ENCODE measurements at regions of chr1 and their contacts with region 1.

Region 1: GRCh38 chr1:150473659-150474058 is 13.6 kb upstream of the TARS2 start:
- DNase-seq: no peak
- ATAC-seq: peak; percentile 34
- H3K4me3 ChIP-seq: no peak overlapping the region
- H3K27ac ChIP-seq: no peak overlapping the region
- H3K4me1 ChIP-seq: no peaks in the 10 kb centered on the region
- H3K27me3 ChIP-seq: no peaks in the 10 kb centered on the region

Region 2: DNA sequence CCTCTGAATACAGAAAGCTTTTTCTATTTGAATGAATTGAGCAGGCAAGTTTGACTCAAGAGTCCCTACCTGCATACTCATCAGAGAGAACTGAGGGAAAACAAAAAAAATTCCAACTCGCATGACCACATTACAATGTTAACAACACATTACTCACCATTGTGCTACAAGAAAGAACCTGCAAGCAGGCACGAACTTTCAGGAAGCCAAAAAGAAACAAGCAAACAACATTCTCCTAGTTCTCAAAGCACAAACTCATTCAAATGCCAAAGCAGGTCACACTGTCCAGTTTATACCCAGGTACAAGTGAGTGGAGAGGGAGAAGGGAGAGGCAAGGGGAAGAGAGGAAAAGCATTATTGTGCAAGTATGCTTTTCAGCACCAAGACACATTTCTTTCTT is 477.7 kb before region 1 on chr1:
- intact Hi-C with region 1: no loop called
- DNase-seq: no peak
- ATAC-seq: no peak
- H3K4me3 ChIP-seq: no peak overlapping the region
- H3K27ac ChIP-seq: no peak overlapping the region
- H3K4me1 ChIP-seq: no peaks in the 10 kb centered on the region
- H3K27me3 ChIP-seq: no peaks in the 10 kb centered on the region

Region 3: GRCh38 chr1:150507905-150508854 is 34.5 kb after region 1 on chr1 and contains the start of gene ECM1:
- intact Hi-C with region 1: loop called in 1 of 2 experiments (anchors 5 kb)
- DNase-seq: peak; percentile 70 to 80
- ATAC-seq: peak; percentile 70
- H3K4me3 ChIP-seq: no peak within 1 kb of the TSS
- H3K27ac ChIP-seq: no peak within 1 kb of the TSS
- H3K4me1 ChIP-seq: no peaks in the 10 kb centered on the region
- H3K27me3 ChIP-seq: no peaks in the 10 kb centered on the region
- total RNA-seq, gene ECM1: 26.3 to 57.6 TPM

Region 4: DNA sequence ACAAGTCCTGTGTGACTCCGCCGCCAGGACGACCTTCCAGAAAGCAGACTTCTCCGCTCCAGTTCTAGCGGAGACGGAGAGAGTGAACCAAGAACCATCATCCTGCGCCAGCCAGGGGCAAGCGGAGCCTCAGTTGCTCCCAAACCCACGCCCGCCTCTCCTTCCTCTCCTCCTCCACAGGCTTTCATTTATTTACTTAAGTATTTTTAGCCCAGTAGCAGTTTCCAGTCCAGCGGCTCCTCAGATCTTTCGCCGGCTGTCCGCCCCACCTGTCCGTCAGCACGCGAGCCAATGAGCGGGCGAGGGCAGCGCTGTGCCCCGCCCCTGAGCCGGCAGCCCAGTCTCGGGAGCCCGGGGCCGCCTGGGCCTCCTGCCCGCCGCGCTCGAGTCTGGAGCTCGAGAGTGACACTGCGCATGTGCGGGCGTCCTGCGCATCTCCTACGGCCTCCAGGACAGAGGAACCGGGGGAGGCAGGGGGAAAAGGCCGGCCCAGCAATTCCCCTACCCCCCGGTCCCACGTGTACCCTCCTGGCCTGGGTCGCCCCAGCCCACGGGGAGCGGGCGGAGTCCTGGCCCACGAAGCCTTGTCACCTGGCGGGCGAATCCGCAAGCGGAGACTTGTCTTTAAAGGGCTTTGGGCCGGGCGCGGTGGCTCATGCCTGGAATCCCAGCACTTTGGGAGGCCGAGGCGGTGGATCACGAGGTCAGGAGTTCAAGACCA is 41.8 kb after region 1 on chr1 and contains the start of gene FALEC:
- intact Hi-C with region 1: loop called in 1 of 2 experiments (anchors 5 kb)
- DNase-seq: peak; percentile 98 to 99
- ATAC-seq: peak; percentile 99
- H3K4me3 ChIP-seq: peak within 1 kb of the TSS; percentile 31 to 40
- H3K27ac ChIP-seq: peak within 1 kb of the TSS; percentile 44 to 61
- H3K4me1 ChIP-seq: no peaks in the 10 kb centered on the region
- H3K27me3 ChIP-seq: no peaks in the 10 kb centered on the region
- total RNA-seq, gene FALEC: 0.99 TPM in 1 of 2 donors, not detected in the other

Region 5: GRCh38 chr1:150603711-150604110 is 130.1 kb after region 1 on chr1:
- intact Hi-C with region 1: no loop called
- DNase-seq: no peak
- ATAC-seq: no peak
- H3K4me3 ChIP-seq: no peak overlapping the region
- H3K27ac ChIP-seq: peak overlapping the region in 1 of 2 donors; percentile 51
- H3K4me1 ChIP-seq: peaks cover 0 to 5% of the 10 kb centered on the region in 2 donors
- H3K27me3 ChIP-seq: no peaks in the 10 kb centered on the region

Measured in aorta (tissue), 5 donors.